Activated CD4-positive, alpha-beta memory T cell treated with anti-CD3 and anti-CD28 coated beads for 36 hours (primary cell): ENCODE measurements at regions of chr17 and their contacts with region 1.

Region 1: DNA sequence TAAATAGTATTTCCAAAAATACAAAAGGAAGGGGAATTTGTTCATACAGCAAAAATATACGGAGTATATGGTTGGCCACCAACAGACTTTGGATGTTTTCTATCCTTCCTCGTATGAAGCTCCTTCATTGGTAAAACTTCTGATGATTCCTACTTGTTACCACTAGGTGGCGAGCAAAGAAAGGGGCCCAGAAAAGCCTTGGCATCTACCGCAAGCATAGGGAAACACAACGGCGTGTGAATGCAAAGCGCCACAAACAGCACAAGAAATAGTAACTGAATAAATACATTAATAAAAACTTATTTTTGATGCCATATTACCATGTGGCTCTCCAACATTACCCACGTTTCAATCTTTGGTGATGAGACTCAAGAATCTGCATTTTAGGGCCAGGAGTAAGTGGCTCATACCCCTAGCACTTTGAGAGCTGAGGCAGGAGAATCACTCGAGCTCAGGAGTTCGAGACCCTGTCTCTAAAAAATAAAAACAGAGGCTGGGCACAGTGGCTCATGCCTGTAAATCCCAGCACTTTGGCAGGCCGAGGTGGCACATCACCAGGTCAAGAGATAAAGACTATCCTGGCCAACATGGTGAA is 34.5 kb downstream of the YWHAE start:
- DNase-seq: peak; percentile 67
- H3K4me3 Mint-ChIP-seq: no peak overlapping the region
- H3K27ac Mint-ChIP-seq: peak overlapping the region; percentile 54
- H3K4me1 Mint-ChIP-seq: peaks cover 69% of the 10 kb centered on the region
- H3K27me3 Mint-ChIP-seq: no peaks in the 10 kb centered on the region

Region 2: DNA sequence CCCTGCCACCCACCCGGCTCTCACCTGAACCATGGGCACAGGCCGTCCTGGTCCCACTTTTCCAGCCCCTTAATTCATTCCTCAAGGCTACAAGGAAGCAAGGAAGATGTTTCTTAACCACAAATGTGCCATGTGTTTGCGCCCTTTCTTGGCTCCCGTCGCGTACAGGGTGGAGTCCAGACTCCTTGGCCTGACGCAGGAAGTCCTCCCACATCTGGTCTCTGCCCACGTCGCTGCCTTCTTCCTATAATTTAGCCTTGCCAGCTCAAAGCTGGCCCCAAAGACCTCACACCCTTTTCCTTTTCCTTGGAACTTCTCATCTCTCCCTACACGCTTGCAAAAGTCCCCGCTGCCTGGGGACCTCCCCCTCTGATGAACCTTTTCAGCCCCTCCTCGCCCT is 134.1 kb before region 1 on chr17:
- CTCF ChIA-PET with region 1: no interaction called
- POLR2A ChIA-PET with region 1: no interaction called
- intact Hi-C with region 1: no loop called
- DNase-seq: no peak
- H3K4me3 Mint-ChIP-seq: no peak overlapping the region
- H3K27ac Mint-ChIP-seq: no peak overlapping the region
- H3K4me1 Mint-ChIP-seq: peaks cover 15% of the 10 kb centered on the region
- H3K27me3 Mint-ChIP-seq: peaks cover 41% of the 10 kb centered on the region

Region 3: GRCh38 chr17:1312261-1312870 is 53.2 kb before region 1 on chr17:
- CTCF ChIA-PET with region 1: no interaction called
- POLR2A ChIA-PET with region 1: no interaction called
- intact Hi-C with region 1: no loop called
- DNase-seq: peak; percentile 22
- H3K4me3 Mint-ChIP-seq: no peak overlapping the region
- H3K27ac Mint-ChIP-seq: no peak overlapping the region
- H3K4me1 Mint-ChIP-seq: no peaks in the 10 kb centered on the region
- H3K27me3 Mint-ChIP-seq: peaks cover 6% of the 10 kb centered on the region

Region 4: DNA sequence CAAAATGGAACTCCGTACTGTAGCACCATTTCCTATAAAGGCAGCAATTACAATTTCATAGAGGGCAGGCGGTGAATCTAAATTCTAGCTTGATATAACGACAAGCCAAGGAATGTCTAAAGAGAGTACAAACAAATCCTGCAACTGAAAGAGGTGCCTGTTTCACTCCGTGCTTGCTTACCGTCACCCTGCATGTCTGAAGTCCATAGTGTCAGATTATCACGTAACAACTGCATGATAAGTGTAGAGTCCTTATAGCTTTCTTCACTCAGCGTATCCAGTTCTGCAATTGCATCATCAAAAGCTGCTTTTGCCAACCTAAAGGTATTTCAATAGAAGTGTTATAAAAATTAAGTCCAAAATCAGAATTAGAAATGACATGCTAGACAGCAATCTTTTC is 11.5 kb before region 1 on chr17:
- CTCF ChIA-PET with region 1: interaction called, 13 read pairs
- POLR2A ChIA-PET with region 1: interaction called, 3 read pairs
- intact Hi-C with region 1: no loop called
- DNase-seq: no peak
- H3K4me3 Mint-ChIP-seq: no peak overlapping the region
- H3K27ac Mint-ChIP-seq: no peak overlapping the region
- H3K4me1 Mint-ChIP-seq: peaks cover 11% of the 10 kb centered on the region
- H3K27me3 Mint-ChIP-seq: no peaks in the 10 kb centered on the region

Region 5: DNA sequence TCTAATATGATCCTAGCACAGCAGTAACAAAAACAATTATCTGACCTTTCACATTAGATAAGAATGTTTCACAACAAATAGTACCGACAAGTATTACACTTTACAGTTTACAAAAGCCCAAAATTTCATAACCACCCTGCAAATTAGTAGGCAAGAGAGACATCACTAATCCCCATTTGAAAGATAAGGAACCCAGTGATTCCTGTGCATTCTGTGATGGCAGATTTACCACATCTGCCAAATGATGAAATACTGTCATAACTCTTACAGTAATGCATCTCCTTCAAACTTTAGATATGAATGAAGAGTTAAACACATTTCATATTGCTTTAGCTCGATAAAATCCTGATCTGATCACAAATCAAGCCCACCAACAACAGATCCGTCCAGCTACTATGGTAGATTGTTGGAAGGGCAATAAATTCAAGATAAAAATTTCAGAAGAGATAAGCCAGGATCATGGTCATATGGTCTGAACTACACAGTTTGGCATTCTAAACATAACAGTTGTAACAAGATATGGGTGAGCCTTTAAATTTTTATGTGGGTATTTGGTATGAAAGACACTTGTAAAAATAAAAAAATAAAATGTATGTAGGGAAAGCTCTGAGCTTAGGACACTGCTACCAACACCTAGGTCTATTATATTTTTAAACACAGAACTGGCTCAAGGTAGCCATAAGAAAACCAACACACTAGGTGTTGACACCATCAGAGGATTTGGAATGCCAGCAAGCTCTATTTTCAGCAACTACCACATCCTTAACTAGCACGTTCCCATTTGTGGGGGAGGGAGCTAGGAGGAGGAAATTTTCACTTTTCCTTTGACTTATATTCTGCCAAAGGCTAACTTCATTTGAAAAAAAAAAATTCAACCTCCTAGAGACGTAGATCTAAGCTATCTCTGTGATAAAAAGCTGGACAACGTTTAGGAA is 25.2 kb after region 1 on chr17:
- CTCF ChIA-PET with region 1: interaction called, 70 read pairs
- POLR2A ChIA-PET with region 1: interaction called, 4 read pairs
- intact Hi-C with region 1: no loop called
- DNase-seq: no peak
- H3K4me3 Mint-ChIP-seq: no peak overlapping the region
- H3K27ac Mint-ChIP-seq: peak overlapping the region; percentile 71
- H3K4me1 Mint-ChIP-seq: peaks cover 73% of the 10 kb centered on the region
- H3K27me3 Mint-ChIP-seq: no peaks in the 10 kb centered on the region

Region 6: GRCh38 chr17:1455797-1456599 is 90.5 kb after region 1 on chr17 and contains the start of gene CRK:
- CTCF ChIA-PET with region 1: interaction called, 18 read pairs
- POLR2A ChIA-PET with region 1: interaction called, 6 read pairs
- intact Hi-C with region 1: loop called (anchors 5 kb)
- DNase-seq: peak; percentile 99
- H3K4me3 Mint-ChIP-seq: peak within 1 kb of the TSS; percentile 85
- H3K27ac Mint-ChIP-seq: peak within 1 kb of the TSS; percentile 88
- H3K4me1 Mint-ChIP-seq: peaks cover 52% of the 10 kb centered on the region
- H3K27me3 Mint-ChIP-seq: peaks cover 5% of the 10 kb centered on the region
- total RNA-seq, gene CRK: 14.1 to 17.8 TPM

Region 7: GRCh38 chr17:1532836-1533602 is 167.5 kb after region 1 on chr17:
- CTCF ChIA-PET with region 1: interaction called, 17 read pairs
- POLR2A ChIA-PET with region 1: no interaction called
- intact Hi-C with region 1: no loop called
- DNase-seq: peak; percentile 61
- H3K4me3 Mint-ChIP-seq: no peak overlapping the region
- H3K27ac Mint-ChIP-seq: no peak overlapping the region
- H3K4me1 Mint-ChIP-seq: peaks cover 5% of the 10 kb centered on the region
- H3K27me3 Mint-ChIP-seq: no peaks in the 10 kb centered on the region